G401 (cell line): ENCODE measurements at regions of chr3 and their contacts with region 1.

Region 1: GRCh38 chr3:47989981-47990440 is 26.2 kb downstream of the MAP4 start:
- DNase-seq: peak; percentile 96

Region 2: DNA sequence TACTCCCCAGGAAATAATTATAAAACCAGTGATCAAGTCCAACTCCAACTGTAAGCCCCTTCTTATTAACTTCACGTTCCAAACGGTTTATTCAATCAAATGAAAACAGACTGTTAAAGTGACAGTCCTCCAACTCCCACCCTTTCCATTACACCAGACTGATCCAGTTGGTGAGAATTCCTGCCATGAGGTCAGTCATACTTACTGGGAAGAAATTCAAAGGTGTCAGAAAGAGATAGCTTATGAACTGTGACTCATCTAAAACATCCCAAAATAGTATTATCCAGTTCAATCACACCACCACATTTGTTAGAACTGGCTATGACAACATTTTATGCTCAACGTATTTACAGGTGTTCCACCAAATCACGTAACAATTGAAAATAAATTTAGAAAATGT is 227.8 kb before region 1 on chr3:
- in situ Hi-C with region 1: no loop called
- DNase-seq: no peak

Region 3: GRCh38 chr3:48039487-48040190 is 49.6 kb after region 1 on chr3:
- in situ Hi-C with region 1: no loop called
- DNase-seq: no peak

Region 4: GRCh38 chr3:48151058-48151806 is 161.2 kb after region 1 on chr3:
- in situ Hi-C with region 1: loop called (anchors 25 kb)
- DNase-seq: peak; percentile 88